ENCODE measurements at regions of chr1 and their contacts with region 1.

Region 1: GRCh38 chr1:1116701-1117465 is 994 bp upstream of the C1orf159 start:
- DNase-seq: peak in 30 of 35 experiments; percentile 7 to 60 (median 36)
- ATAC-seq: peak in 2 of 4 experiments; percentile 2 to 3
- H3K4me3 ChIP-seq: peak overlapping the region; percentile 40 to 47
- H3K4me3 Mint-ChIP-seq: peak overlapping the region; percentile 49 to 86 (median 56)
- H3K27ac ChIP-seq: no peak overlapping the region
- H3K27ac Mint-ChIP-seq: no peak overlapping the region
- H3K4me1 ChIP-seq: peaks cover 3 to 25% of the 10 kb centered on the region in 2 experiments
- H3K4me1 Mint-ChIP-seq: peaks cover 6 to 14% (median 7%) of the 10 kb centered on the region in 3 donors
- H3K27me3 ChIP-seq: peaks cover 0 to 43% of the 10 kb centered on the region in 2 experiments
- H3K27me3 Mint-ChIP-seq: peaks cover 0 to 8% of the 10 kb centered on the region in 2 donors

Region 2: DNA sequence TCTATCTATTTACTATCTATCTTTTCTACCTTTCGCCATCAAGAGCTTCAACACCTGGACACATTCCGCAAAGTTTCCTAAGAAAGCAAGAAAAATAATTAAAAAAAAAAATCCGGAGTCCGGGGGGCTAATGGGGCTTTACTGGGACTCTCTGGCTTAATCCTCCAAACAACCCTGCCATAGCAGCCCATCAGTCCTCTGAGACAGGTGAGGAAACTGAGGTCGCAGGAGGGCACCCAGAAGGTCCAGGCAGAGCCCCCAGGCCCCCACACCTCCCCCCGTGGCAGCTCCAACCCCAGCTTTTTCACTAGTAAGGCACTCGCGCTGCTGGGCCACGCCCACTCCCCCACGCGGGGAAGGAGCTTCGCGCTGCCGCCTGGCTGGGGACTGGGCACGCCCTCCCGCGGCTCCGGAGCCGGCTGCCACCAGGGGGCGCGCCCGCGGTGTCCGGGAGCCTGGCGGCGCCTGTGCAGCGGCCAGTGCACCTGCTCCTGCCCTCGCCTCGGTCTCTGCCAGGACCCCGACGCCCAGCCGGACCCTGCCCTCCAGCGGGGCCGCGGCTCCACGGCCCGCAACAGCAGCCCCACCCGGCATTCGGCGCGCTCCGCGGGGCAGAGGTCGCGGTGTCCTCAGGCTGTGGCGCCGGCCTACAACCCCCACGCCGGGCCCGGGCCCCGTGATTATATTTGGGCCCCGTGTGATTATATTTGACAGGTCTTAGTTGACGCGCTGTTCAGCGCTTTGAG is 247.2 kb before region 1 on chr1:
- CTCF ChIA-PET with region 1: no interaction called
- POLR2A ChIA-PET with region 1: no interaction called
- DNase-seq: peak; percentile 73 to 90 (median 83)
- ATAC-seq: peak; percentile 96 to 99 (median 98)
- H3K4me3 ChIP-seq: no peak overlapping the region
- H3K4me3 Mint-ChIP-seq: peak overlapping the region in 1 of 3 donors; percentile 22
- H3K27ac ChIP-seq: no peak overlapping the region
- H3K27ac Mint-ChIP-seq: no peak overlapping the region
- H3K4me1 ChIP-seq: peaks cover 0 to 6% of the 10 kb centered on the region in 2 experiments
- H3K4me1 Mint-ChIP-seq: peaks cover 0 to 14% (median 2%) of the 10 kb centered on the region in 3 donors
- H3K27me3 ChIP-seq: peaks cover 0 to 26% of the 10 kb centered on the region in 2 experiments
- H3K27me3 Mint-ChIP-seq: peaks cover 17 to 25% of the 10 kb centered on the region in 2 donors

Region 3: DNA sequence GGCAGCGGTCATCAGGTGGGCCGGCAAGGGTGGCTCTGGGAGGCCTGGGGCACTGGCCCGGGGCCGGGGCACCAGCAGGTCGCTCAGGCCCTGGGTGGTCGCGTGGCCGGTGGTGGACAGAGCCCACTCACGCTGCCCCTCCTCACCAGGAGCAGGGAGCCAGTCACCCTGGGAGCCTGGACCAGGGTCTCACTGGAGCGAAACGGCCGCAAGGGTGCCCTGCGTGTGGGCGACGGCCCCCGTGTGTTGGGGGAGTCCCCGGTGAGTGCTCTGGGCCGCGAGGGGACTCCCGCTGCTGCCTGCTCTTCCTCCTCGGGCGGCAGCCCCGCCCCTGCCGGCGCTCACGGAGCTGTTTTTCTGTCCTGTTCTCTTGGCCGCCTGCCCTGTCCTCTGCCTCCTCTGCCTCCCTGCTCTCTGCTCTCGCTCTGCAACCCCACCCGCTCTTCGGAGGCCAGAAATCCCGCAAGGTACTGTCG is 66.3 kb before region 1 on chr1:
- CTCF ChIA-PET with region 1: no interaction called
- POLR2A ChIA-PET with region 1: no interaction called
- DNase-seq: no peak
- ATAC-seq: no peak
- H3K4me3 ChIP-seq: no peak overlapping the region
- H3K4me3 Mint-ChIP-seq: no peak overlapping the region
- H3K27ac ChIP-seq: no peak overlapping the region
- H3K27ac Mint-ChIP-seq: no peak overlapping the region
- H3K4me1 ChIP-seq: no peaks in the 10 kb centered on the region
- H3K4me1 Mint-ChIP-seq: no peaks in the 10 kb centered on the region
- H3K27me3 ChIP-seq: peaks cover 0 to 4% of the 10 kb centered on the region in 2 experiments
- H3K27me3 Mint-ChIP-seq: no peaks in the 10 kb centered on the region

Region 4: DNA sequence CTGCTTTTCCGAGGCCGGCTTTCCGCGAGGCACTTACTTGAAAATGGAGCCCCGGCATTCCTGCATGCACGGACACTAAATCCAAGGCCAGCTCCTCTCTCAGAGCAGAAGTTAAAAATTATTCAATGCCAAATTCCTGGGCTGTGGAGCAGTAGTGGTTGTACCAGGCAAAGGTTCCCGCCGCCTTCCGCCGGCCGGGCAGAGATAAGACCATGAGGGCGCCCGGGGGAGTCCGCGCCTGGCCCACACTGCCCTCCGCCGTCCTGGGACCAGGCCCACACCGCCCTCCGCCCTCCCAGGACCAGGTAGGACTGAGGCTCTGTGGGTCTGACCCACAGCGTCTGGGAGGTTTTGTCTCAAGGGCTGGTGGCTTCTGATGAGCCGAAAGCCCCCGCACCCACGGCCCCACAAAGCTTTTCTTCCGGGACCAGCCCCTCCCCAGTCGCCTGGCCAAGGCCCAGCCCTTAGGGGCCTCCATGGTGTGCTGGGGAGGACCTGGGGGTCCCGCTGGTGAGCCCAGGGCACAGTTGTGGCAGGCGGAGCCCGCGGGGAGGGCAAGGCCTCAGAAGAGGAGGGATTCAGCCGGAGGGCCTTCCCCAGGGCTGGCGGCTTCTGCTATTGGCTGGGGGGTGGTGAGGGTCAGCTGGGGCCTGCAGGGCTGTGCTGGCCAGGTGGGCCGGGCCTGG is 11.7 kb after region 1 on chr1:
- CTCF ChIA-PET with region 1: no interaction called
- POLR2A ChIA-PET with region 1: no interaction called
- DNase-seq: no peak
- ATAC-seq: no peak
- H3K4me3 ChIP-seq: no peak overlapping the region
- H3K4me3 Mint-ChIP-seq: no peak overlapping the region
- H3K27ac ChIP-seq: no peak overlapping the region
- H3K27ac Mint-ChIP-seq: no peak overlapping the region
- H3K4me1 ChIP-seq: no peaks in the 10 kb centered on the region
- H3K4me1 Mint-ChIP-seq: peaks cover 0 to 6% (median 0%) of the 10 kb centered on the region in 3 donors
- H3K27me3 ChIP-seq: peaks cover 0 to 13% of the 10 kb centered on the region in 2 experiments
- H3K27me3 Mint-ChIP-seq: no peaks in the 10 kb centered on the region

Region 5: GRCh38 chr1:1144122-1144842 is 27.4 kb after region 1 on chr1:
- CTCF ChIA-PET with region 1: no interaction called
- POLR2A ChIA-PET with region 1: interaction called in 1 of 2 experiments, 17 read pairs
- DNase-seq: peak; percentile 38 to 77 (median 62)
- ATAC-seq: peak; percentile 90 to 97 (median 94)
- H3K4me3 ChIP-seq: peak overlapping the region; percentile 10 to 27
- H3K4me3 Mint-ChIP-seq: peak overlapping the region in 2 of 3 donors; percentile 21 to 59
- H3K27ac ChIP-seq: peak overlapping the region; percentile 92
- H3K27ac Mint-ChIP-seq: peak overlapping the region; percentile 89 to 96
- H3K4me1 ChIP-seq: peaks cover 5 to 39% of the 10 kb centered on the region in 2 experiments
- H3K4me1 Mint-ChIP-seq: peaks cover 0 to 17% (median 5%) of the 10 kb centered on the region in 3 donors
- H3K27me3 ChIP-seq: peaks cover 0 to 39% of the 10 kb centered on the region in 2 experiments
- H3K27me3 Mint-ChIP-seq: no peaks in the 10 kb centered on the region

Region 6: GRCh38 chr1:1245178-1245816 is 128.4 kb after region 1 on chr1:
- CTCF ChIA-PET with region 1: no interaction called
- POLR2A ChIA-PET with region 1: no interaction called
- DNase-seq: no peak
- ATAC-seq: no peak
- H3K4me3 ChIP-seq: no peak overlapping the region
- H3K4me3 Mint-ChIP-seq: no peak overlapping the region
- H3K27ac ChIP-seq: no peak overlapping the region
- H3K27ac Mint-ChIP-seq: no peak overlapping the region
- H3K4me1 ChIP-seq: peaks cover under 1 to 25% of the 10 kb centered on the region in 2 experiments
- H3K4me1 Mint-ChIP-seq: peaks cover 0 to 7% (median 7%) of the 10 kb centered on the region in 3 donors
- H3K27me3 ChIP-seq: peaks cover 0 to 60% of the 10 kb centered on the region in 2 experiments
- H3K27me3 Mint-ChIP-seq: peaks cover 0 to 2% of the 10 kb centered on the region in 2 donors

Measured in T-cell (primary cell).